Activated naive CD4-positive, alpha-beta T cell treated with anti-CD3 and anti-CD28 coated beads, Interleukin-2, amount 10 ng/mL, durations not matched to agents 7 days and 5 days (primary cell): ENCODE measurements at regions of chr11 and their contacts with region 1.

Region 1: DNA sequence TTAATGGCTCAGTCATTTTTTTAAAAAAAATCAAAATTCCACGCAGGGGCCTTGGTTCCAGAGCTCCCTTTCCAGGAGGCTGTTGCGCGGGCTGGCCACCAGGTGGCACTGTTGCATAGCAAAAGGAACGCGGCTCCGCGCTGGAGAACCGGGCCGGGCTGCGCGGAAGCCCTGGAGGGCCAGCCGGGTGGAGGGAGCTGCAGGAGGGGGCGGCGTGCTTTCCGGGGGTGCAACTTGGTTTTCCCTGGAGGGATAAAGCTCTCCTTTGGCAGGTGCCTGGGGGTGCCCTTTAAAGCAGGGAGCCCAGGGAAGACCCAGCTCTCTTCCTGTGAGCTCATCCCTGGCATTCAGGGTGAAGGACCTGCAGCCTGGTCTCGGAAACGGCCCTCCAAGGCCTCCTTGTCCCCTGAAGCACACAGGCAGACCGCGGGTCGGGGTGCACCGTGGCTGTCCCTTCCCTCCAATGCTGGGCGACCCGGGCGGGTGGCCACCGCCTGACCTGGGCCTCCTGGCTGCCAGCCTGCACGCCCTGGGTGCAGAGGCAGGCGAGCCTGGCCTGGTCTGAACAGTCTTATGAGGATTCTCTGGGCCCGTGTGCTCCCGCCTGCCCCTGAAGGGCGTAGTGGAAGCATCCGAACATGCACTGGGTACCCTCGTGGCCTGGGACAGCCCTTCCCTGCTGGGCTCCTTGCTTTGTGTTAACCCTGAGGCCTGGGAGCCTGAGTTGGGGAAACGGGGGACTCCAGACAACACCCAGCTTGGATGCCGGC is 23.4 kb downstream of the KRTAP5-5 start:
- DNase-seq: peak; percentile 82
- H3K4me3 Mint-ChIP-seq: no peak overlapping the region
- H3K27ac Mint-ChIP-seq: no peak overlapping the region
- H3K4me1 Mint-ChIP-seq: no peaks in the 10 kb centered on the region
- H3K27me3 Mint-ChIP-seq: peaks cover 52% of the 10 kb centered on the region

Region 2: GRCh38 chr11:1608363-1608762 is 44.6 kb before region 1 on chr11 and contains the start of gene KRTAP5-3:
- CTCF ChIA-PET with region 1: no interaction called
- DNase-seq: no peak
- H3K4me3 Mint-ChIP-seq: no peak within 1 kb of the TSS
- H3K27ac Mint-ChIP-seq: no peak within 1 kb of the TSS
- H3K4me1 Mint-ChIP-seq: peaks cover 9% of the 10 kb centered on the region
- H3K27me3 Mint-ChIP-seq: peaks cover 53% of the 10 kb centered on the region

Region 3: DNA sequence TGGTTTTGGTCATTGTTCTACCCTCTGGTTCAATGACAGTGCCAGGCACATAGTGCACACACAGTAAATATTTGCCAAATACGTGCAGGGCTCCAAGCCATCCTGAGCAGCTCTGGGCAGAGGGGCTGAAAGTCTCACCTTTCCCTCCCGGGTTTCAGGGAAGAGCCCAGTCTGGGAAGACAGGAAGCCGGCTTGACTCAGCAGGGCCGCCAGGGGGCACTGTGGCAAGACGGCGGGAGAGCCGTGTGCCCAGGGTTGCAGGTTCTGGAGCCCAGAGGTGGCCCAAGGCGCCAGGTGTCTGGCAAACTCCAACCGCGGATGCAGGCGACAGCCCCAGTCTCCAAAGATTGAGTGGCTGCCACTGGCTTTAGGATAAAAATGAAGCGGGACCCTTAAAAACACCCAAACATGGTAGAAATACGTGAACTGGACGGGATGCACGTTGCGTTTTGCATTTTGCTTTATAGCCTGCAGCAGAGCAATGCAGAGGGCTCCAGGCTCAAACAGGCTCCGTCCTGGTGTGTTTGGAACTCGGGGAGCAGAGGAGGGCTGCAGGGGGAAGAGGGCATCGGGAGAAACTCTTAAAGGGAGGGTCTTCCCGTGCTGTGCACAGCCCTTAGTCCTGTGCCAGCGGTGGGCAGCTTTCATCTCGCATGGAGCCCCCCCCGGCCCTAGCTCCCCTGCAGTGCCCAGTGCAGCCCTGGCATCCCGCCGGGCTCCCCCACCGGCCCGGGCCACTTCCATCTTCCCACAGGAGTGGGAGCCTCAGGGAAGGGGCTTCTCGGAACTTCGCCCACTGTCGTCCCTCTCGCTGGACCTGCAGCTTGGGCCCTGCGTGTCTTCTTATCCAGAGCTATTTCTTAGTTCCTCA is 12.6 kb before region 1 on chr11:
- CTCF ChIA-PET with region 1: interaction called, 15 read pairs
- DNase-seq: peak; percentile 39
- H3K4me3 Mint-ChIP-seq: no peak overlapping the region
- H3K27ac Mint-ChIP-seq: no peak overlapping the region
- H3K4me1 Mint-ChIP-seq: peaks cover 2% of the 10 kb centered on the region
- H3K27me3 Mint-ChIP-seq: peaks cover 23% of the 10 kb centered on the region

Region 4: DNA sequence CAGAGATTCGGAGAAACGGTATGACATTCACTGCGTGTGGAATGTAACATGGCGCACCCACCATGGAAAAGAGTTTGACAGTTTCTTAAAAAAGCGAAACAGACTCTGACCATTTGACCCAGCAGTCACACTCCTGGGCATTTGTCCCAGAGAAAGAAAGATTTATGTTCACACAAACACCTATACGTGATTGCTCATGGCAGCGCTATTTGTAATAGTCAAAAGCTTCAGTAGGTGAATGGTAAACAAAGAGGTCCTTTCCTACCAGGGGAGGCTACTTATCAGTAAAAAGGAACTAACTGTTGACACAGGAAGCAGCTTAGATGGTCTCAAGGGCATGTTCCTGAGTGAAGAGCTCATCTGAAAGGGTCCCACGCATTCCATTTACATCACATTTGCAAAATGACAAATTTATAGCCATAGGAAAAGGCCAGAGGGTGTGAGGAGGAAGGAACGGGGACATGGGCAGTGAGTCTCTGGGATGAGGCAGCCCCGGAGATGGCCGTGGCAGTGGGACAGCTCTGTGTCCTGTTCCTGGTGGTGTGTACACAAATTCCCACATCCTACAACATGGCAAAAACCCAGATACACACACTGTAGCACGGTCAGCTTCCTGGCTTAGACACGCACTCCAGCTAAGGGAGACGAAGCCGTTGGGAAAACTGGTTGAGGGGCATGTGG is 29.4 kb after region 1 on chr11:
- CTCF ChIA-PET with region 1: interaction called, 10 read pairs
- DNase-seq: no peak
- H3K4me3 Mint-ChIP-seq: no peak overlapping the region
- H3K27ac Mint-ChIP-seq: no peak overlapping the region
- H3K4me1 Mint-ChIP-seq: no peaks in the 10 kb centered on the region
- H3K27me3 Mint-ChIP-seq: peaks cover 11% of the 10 kb centered on the region

Region 5: GRCh38 chr11:1749414-1750312 is 96.7 kb after region 1 on chr11:
- CTCF ChIA-PET with region 1: no interaction called
- DNase-seq: no peak
- H3K4me3 Mint-ChIP-seq: no peak overlapping the region
- H3K27ac Mint-ChIP-seq: no peak overlapping the region
- H3K4me1 Mint-ChIP-seq: peaks cover 20% of the 10 kb centered on the region
- H3K27me3 Mint-ChIP-seq: peaks cover 53% of the 10 kb centered on the region